Naive thymus-derived CD4-positive, alpha-beta T cell (primary cell): ENCODE measurements at regions of chr7 and their contacts with region 1.

Region 1: GRCh38 chr7:35854311-35854710 is 53.5 kb downstream of the SEPTIN7 start:
- DNase-seq: no peak
- ATAC-seq: no peak
- H3K4me3 ChIP-seq: no peak overlapping the region
- H3K4me3 Mint-ChIP-seq: peak overlapping the region in 2 of 10 donors; percentile 5 to 23
- H3K27ac ChIP-seq: no peak overlapping the region
- H3K27ac Mint-ChIP-seq: peak overlapping the region in 1 of 9 donors; percentile 22
- H3K4me1 ChIP-seq: peaks cover 0 to 1% of the 10 kb centered on the region in 2 donors
- H3K4me1 Mint-ChIP-seq: peaks cover 28 to 89% (median 70%) of the 10 kb centered on the region in 7 donors
- H3K27me3 ChIP-seq: no peaks in the 10 kb centered on the region
- H3K27me3 Mint-ChIP-seq: no peaks in the 10 kb centered on the region

Region 2: DNA sequence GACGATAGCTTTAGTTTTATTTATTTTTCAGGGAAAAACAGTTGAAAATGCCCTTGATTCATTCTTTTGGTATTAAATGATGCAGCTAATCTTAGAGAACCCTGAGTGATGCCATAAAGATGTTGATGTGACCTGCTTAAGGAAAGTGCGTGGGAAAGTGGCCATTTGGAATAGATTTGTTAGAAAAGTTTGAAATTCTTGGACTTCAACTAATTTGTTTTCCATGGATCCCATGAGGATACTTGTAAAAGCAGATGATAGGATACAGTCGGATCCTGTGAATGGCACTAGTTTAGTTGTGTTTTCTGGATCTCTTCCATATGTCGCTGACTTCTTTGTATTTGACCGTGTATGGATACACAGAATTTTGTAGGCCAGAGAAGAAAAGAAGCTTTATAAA is 15.5 kb after region 1 on chr7:
- CTCF ChIA-PET with region 1: no interaction called
- POLR2A ChIA-PET with region 1: no interaction called
- intact Hi-C with region 1: loop called in 1 of 2 experiments (anchors 2 kb)
- DNase-seq: no peak
- ATAC-seq: no peak
- H3K4me3 ChIP-seq: no peak overlapping the region
- H3K4me3 Mint-ChIP-seq: no peak overlapping the region
- H3K27ac ChIP-seq: no peak overlapping the region
- H3K27ac Mint-ChIP-seq: peak overlapping the region in 1 of 9 donors; percentile 29
- H3K4me1 ChIP-seq: no peaks in the 10 kb centered on the region
- H3K4me1 Mint-ChIP-seq: peaks cover 14 to 56% (median 40%) of the 10 kb centered on the region in 7 donors
- H3K27me3 ChIP-seq: no peaks in the 10 kb centered on the region
- H3K27me3 Mint-ChIP-seq: no peaks in the 10 kb centered on the region